ENCODE measurements at regions of chr2 and their contacts with region 1.

Region 1: DNA sequence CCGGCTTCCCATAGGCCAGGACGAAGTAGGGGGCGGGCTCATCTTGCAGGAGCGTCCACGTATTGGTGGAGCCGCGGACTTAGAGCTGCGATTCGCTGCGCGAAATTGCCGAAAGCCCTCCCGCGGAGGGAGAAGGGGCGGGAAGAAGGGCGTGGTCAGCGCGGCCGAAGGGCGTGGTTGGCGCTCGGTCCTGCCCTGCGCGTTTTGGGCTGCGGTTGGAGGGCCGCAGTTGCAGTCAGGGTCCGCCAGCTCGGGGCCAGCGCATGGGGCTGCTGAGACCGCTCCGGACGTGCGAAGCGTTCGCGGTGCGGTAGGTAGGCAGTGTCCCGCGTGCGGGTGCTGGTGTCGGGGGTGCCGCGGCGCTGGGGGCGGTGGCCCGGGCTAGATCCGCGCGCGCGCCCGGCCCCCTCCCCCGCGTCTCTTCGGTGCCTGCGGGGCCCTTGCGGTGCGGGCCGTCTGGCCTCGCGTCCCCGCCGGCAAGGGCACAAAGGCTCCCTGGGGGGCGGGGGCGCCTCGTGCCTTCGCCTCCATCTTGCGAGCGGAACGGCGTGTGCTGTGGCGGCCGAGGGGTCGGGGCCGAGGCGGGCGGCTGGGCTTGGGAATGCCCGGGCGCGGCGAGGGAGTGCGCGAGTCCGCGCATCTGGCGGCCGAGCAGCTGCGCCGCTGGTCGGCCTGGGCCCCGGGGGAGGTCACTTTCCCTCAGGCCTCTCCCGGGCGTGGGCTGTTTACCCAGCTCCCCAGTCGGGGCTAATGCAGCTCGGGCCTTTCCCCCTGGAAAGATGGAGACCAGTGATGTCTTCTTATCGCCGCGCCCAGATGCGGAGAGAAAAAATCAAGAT is at the start of gene CEP68:
- DNase-seq: peak; percentile 96
- H3K4me3 Mint-ChIP-seq: peak within 1 kb of the TSS; percentile 92
- H3K27ac Mint-ChIP-seq: peak within 1 kb of the TSS; percentile 73
- H3K4me1 Mint-ChIP-seq: peaks cover 52% of the 10 kb centered on the region
- H3K27me3 Mint-ChIP-seq: no peaks in the 10 kb centered on the region
- total RNA-seq, gene CEP68: 5.9 and 6.1 TPM in 2 replicates

Region 2: DNA sequence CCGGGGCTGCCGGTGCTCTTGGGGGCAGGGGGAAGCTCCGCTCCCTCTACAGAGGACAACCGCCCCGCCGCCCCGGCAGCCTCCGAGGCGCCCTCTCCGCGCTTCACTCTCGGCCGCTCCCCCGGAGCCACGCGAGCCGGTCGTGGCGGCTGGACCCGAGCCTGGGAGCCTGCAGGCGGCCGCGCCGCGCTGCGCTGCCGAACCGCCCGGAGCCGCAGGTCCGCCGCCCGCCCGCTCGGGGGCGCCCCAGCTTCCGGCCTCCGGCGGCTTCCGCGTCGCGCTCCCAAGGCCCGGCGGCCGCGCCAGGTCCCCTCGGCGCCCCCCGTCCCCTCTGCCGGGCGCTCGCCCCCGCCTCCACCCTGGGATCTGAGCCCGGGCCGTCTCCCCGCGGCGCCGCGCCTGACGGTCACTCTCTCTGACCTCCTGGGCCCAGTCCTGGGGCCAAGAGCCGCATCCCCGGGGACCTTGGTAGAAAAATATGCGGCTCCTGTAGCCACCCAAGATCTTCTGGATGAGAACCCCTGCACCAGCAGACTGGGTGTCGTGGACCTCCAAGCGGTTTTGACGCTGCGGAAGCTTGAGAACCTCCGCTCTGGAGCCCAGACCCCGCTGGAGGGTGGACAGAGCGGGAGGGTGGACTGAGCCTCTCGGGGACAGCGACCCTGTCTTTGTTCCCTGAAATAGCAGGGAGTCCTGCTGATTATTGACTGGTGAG is 447.1 kb before region 1 on chr2:
- intact Hi-C with region 1: loop called (anchors 1 kb)
- DNase-seq: peak; percentile 69
- H3K4me3 Mint-ChIP-seq: peak overlapping the region; percentile 66
- H3K27ac Mint-ChIP-seq: peak overlapping the region; percentile 42
- H3K4me1 Mint-ChIP-seq: peaks cover 24% of the 10 kb centered on the region
- H3K27me3 Mint-ChIP-seq: peaks cover 21% of the 10 kb centered on the region

Region 3: GRCh38 chr2:64852771-64853705 is 203.4 kb before region 1 on chr2:
- intact Hi-C with region 1: no loop called
- DNase-seq: no peak
- H3K4me3 Mint-ChIP-seq: no peak overlapping the region
- H3K27ac Mint-ChIP-seq: no peak overlapping the region
- H3K4me1 Mint-ChIP-seq: peaks cover 17% of the 10 kb centered on the region
- H3K27me3 Mint-ChIP-seq: peaks cover 4% of the 10 kb centered on the region

Region 4: DNA sequence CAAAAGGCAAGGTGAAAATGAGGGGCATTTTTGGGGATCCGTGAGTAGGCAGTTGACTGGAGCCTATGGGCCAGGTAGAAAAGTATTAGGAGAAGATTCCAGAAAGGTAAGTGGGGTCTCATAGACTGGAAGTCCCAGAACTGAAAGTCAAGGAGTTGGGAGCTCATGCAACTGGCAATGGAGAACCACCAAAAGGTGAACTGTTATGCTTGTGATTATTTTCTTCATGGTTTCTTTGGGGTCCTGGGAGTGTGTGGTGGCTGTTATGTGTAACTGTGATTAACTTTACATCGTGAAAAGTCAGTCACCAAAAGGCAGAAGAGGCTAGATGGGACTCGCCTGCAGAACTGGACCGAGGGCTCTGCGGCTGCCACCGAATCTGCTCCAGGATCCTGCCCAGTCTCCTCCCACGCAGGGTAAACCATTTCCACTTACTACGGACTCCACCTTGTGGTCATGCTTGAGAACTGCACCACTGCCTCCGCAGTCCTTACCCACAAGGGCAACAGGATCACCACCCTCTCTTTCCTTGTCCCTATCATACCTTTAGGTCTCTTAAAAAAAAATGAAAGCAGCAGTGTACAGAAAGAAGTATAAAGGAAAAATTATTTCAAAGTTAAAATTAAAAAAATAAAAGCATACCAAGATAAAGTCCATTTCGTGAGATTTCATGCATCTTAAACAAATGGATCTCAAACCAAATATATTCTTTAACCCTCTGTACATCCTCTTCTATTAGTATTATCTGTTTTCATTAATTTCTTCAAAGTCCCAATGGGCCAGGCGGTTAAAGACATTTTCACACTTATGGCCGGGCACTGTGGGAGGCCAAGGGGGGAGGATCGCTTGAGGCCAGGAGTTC is 15.8 kb before region 1 on chr2:
- intact Hi-C with region 1: no loop called
- DNase-seq: peak; percentile 69
- H3K4me3 Mint-ChIP-seq: no peak overlapping the region
- H3K27ac Mint-ChIP-seq: no peak overlapping the region
- H3K4me1 Mint-ChIP-seq: peaks cover 20% of the 10 kb centered on the region
- H3K27me3 Mint-ChIP-seq: no peaks in the 10 kb centered on the region

Region 5: GRCh38 chr2:65129826-65130663 is 73.6 kb after region 1 on chr2 and contains the start of gene RAB1A:
- intact Hi-C with region 1: loop called (anchors 1 kb)
- DNase-seq: peak; percentile 98
- H3K4me3 Mint-ChIP-seq: peak within 1 kb of the TSS; percentile 100
- H3K27ac Mint-ChIP-seq: peak within 1 kb of the TSS; percentile 100
- H3K4me1 Mint-ChIP-seq: peaks cover 35% of the 10 kb centered on the region
- H3K27me3 Mint-ChIP-seq: peaks cover 6% of the 10 kb centered on the region
- total RNA-seq, gene RAB1A: 88.1 and 96.6 TPM in 2 replicates

Region 6: GRCh38 chr2:65227425-65228262 is 171.2 kb after region 1 on chr2 and contains the start of gene ACTR2:
- intact Hi-C with region 1: loop called (anchors 2 kb)
- DNase-seq: peak; percentile 95
- H3K4me3 Mint-ChIP-seq: peak within 1 kb of the TSS; percentile 98
- H3K27ac Mint-ChIP-seq: peak within 1 kb of the TSS; percentile 96
- H3K4me1 Mint-ChIP-seq: peaks cover 27% of the 10 kb centered on the region
- H3K27me3 Mint-ChIP-seq: no peaks in the 10 kb centered on the region
- total RNA-seq, gene ACTR2: 339 and 350 TPM in 2 replicates

Region 7: DNA sequence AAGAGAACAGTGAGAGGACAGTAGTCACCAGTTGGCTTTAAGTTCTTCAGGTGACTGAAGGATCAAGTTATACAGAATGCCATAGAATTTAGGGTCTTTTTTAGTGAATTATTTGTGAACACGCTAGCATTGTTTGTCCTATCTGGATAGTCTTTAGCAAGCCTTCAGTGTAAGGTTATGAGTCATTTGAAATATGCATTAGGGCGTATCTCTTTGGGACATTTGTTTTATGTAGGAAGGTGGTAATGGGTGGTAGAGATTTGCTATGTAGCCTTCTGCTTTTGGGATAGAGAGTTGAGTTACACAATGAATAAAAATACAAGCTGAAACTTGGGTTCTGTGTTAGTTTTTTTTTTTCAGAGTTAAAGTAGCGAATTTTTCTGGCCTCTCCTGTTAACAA is 184.2 kb after region 1 on chr2:
- intact Hi-C with region 1: no loop called
- DNase-seq: no peak
- H3K4me3 Mint-ChIP-seq: no peak overlapping the region
- H3K27ac Mint-ChIP-seq: peak overlapping the region; percentile 15
- H3K4me1 Mint-ChIP-seq: peaks cover 17% of the 10 kb centered on the region
- H3K27me3 Mint-ChIP-seq: no peaks in the 10 kb centered on the region

Region 8: GRCh38 chr2:65554765-65555591 is 498.5 kb after region 1 on chr2:
- intact Hi-C with region 1: loop called (anchors 5 kb)
- DNase-seq: no peak
- H3K4me3 Mint-ChIP-seq: no peak overlapping the region
- H3K27ac Mint-ChIP-seq: no peak overlapping the region
- H3K4me1 Mint-ChIP-seq: peaks cover 16% of the 10 kb centered on the region
- H3K27me3 Mint-ChIP-seq: peaks cover 27% of the 10 kb centered on the region

Measured in activated T-helper 2 cell treated with anti-CD3 and anti-CD28 coated beads, Interferon-gamma antibody, Interleukin-2, Interleukin-4, amounts not matched to agents 10 μg/mL and 5 μg/mL and 100 μg/mL, durations not matched to agents 14 hours and 24 hours and 36 hours (primary cell).